Heart right ventricle (tissue), 16 donors: ENCODE measurements at regions of chr9 and their contacts with region 1.

Region 1: DNA sequence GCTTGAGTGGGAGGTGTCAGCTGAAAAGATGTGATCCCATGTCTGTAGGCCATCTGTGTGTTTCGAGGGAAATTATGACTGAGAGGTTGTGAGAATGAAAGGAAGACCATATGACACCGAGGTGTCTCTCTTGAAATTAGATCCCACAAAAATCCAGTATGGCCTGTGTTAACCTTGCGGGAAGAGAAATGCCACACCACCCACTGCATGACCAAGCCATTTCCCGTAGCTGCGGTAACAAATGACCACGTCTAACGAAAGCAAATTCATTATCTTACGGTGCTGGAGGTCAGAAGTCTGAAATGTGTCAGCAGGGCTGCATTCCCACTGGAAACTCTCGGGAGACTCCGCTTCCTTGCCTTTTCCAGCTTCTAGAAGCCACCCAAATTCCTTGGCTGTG is 11.6 kb downstream of the C9orf57 start:
- DNase-seq: no peak
- ATAC-seq: no peak
- H3K4me3 ChIP-seq: no peak overlapping the region
- H3K27ac ChIP-seq: no peak overlapping the region
- H3K4me1 ChIP-seq: no peaks in the 10 kb centered on the region
- H3K27me3 ChIP-seq: peaks cover 0 to 4% (median 0%) of the 10 kb centered on the region in 7 donors
- CTCF ChIP-seq: no peak

Region 2: DNA sequence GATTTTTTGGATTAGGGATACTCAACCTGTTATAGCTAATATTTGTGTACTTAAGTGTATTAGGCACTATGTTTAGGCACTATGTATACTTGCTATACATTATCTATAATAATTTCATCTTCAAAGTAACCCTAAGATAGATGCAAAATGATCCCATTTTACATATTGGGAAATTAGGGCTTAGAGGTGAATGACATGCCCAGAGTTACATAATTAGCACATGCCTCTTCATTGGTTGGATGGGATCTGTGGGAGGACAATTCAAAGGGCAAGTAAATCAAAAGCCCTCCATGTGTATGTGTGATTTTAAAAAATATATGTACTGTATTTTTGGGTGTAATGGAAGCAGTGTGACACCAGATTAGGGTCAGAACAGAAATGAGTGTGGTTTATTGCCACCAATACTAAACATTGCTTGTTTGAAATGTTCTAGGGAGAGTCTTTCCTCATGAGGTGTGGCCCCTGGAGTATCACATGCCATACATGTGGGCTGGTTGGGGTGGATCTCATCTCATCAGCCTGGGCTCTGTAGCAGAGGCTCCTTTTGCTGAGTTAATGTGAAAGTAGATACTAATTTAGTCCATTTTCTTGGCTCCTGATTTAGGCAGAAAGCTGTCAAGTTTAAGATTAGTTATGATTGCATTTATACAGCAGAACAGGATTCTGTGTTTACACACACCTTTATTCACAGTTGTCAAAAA is 131.9 kb before region 1 on chr9:
- intact Hi-C with region 1: no loop called
- DNase-seq: no peak
- ATAC-seq: no peak
- H3K4me3 ChIP-seq: no peak overlapping the region
- H3K27ac ChIP-seq: no peak overlapping the region
- H3K4me1 ChIP-seq: peaks cover 0 to 49% (median 28%) of the 10 kb centered on the region in 9 donors
- H3K27me3 ChIP-seq: no peaks in the 10 kb centered on the region
- CTCF ChIP-seq: no peak

Region 3: DNA sequence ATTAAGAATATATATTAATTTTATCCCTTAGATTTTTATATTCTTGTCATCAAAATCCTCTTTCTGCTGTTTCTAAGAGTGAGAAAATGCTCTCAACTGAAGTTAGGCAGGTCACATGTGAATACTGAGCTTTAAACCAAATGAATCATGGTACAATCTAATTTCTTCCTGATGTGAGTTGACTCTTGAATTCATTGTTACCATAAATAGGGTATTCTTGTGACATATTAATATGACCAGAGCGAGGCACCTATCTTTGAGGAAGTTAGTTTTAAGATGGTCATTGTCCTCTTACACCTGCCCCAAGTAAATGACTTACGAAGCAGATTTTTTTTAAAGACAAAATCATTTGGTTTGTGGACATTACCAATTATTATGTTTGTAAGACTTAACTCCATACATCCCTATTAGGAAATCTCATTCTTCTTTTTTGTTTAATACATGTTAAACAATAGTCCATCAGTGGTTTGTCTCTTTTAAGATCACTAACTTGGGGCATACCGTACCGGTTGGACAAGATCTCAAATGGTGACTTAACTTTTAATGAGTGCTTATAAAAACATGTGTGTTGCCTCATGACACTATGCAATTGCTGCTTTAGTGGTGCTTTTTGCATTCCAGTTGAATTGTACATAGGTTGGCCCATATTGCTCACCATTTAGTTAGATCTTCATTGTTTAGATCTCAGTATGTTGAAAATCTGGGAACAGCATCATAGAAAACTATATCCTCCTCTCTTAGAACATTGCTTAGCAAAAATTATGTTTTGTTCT is 119.8 kb before region 1 on chr9:
- intact Hi-C with region 1: no loop called
- DNase-seq: no peak
- ATAC-seq: no peak
- H3K4me3 ChIP-seq: no peak overlapping the region
- H3K27ac ChIP-seq: no peak overlapping the region
- H3K4me1 ChIP-seq: peaks cover 0 to 10% (median 0%) of the 10 kb centered on the region in 9 donors
- H3K27me3 ChIP-seq: no peaks in the 10 kb centered on the region
- CTCF ChIP-seq: no peak

Region 4: DNA sequence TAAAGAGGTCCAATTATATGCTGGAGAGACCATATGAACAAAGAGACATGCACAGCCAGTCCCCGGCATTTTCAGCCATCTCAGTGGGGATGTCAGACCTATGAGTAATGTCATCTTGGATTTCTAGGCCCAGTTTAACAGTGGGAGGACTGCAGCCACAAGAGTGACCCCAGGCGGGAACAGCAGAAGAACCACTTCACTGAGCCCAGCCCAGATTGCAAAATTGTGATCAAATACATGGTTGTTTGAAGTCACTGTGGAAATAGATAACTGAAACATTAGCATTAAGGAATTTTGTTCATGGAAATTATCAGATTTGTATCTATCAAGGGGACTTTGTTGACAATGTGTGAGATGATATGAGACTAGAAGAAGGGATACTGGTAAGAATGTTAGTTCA is 53.7 kb after region 1 on chr9:
- intact Hi-C with region 1: no loop called
- DNase-seq: no peak
- ATAC-seq: no peak
- H3K4me3 ChIP-seq: no peak overlapping the region
- H3K27ac ChIP-seq: no peak overlapping the region
- H3K4me1 ChIP-seq: no peaks in the 10 kb centered on the region
- H3K27me3 ChIP-seq: no peaks in the 10 kb centered on the region
- CTCF ChIP-seq: no peak

Region 5: DNA sequence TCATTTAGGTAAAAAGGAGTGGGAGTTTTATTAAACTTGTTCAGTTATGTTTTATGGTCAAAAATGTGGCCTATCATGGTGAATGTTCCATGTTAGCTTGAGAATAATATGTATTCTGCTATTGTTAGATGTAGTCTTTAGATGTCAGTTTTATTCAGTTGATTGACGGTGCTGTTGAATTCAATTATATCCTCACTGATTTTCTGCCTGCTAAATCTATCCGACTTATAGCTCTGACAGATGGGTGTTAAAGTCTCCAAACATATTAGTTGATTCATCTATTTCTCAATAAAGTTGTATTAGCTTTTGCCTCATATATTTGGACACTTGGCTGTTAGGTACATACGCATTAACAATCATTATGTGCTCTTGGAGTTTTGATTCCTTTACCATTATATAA is 953.0 kb after region 1 on chr9:
- intact Hi-C with region 1: loop called in 1 of 10 experiments (anchors 5 kb)
- DNase-seq: no peak
- ATAC-seq: no peak
- H3K4me3 ChIP-seq: no peak overlapping the region
- H3K27ac ChIP-seq: no peak overlapping the region
- H3K4me1 ChIP-seq: peaks cover 0 to 8% (median 0%) of the 10 kb centered on the region in 9 donors
- H3K27me3 ChIP-seq: peaks cover 0 to 4% (median 0%) of the 10 kb centered on the region in 7 donors
- CTCF ChIP-seq: no peak